ENCODE measurements at regions of chr7 and their contacts with region 1.

Region 1: GRCh38 chr7:30412810-30413504 is 65.6 kb downstream of the NOD1 start:
- DNase-seq: peak in 3 of 9 donors; percentile 7 to 15 (median 8)
- ATAC-seq: peak; percentile 49
- H3K4me3 ChIP-seq: no peak overlapping the region
- H3K4me3 Mint-ChIP-seq: no peak overlapping the region
- H3K27ac ChIP-seq: no peak overlapping the region
- H3K27ac Mint-ChIP-seq: no peak overlapping the region
- H3K4me1 ChIP-seq: no peaks in the 10 kb centered on the region
- H3K4me1 Mint-ChIP-seq: peaks cover 0 to 6% (median 0%) of the 10 kb centered on the region in 7 donors
- H3K27me3 ChIP-seq: no peaks in the 10 kb centered on the region
- H3K27me3 Mint-ChIP-seq: no peaks in the 10 kb centered on the region

Region 2: GRCh38 chr7:30164567-30164966 is 248.4 kb before region 1 on chr7:
- CTCF ChIA-PET with region 1: no interaction called
- POLR2A ChIA-PET with region 1: no interaction called
- intact Hi-C with region 1: loop called in 1 of 2 experiments (anchors 2 kb)
- DNase-seq: no peak
- ATAC-seq: peak; percentile 43
- H3K4me3 ChIP-seq: no peak overlapping the region
- H3K4me3 Mint-ChIP-seq: no peak overlapping the region
- H3K27ac ChIP-seq: no peak overlapping the region
- H3K27ac Mint-ChIP-seq: no peak overlapping the region
- H3K4me1 ChIP-seq: peaks cover 10 to 20% of the 10 kb centered on the region in 2 donors
- H3K4me1 Mint-ChIP-seq: peaks cover 25 to 44% (median 32%) of the 10 kb centered on the region in 7 donors
- H3K27me3 ChIP-seq: no peaks in the 10 kb centered on the region
- H3K27me3 Mint-ChIP-seq: peaks cover 0 to 3% (median 0%) of the 10 kb centered on the region in 5 donors

Region 3: DNA sequence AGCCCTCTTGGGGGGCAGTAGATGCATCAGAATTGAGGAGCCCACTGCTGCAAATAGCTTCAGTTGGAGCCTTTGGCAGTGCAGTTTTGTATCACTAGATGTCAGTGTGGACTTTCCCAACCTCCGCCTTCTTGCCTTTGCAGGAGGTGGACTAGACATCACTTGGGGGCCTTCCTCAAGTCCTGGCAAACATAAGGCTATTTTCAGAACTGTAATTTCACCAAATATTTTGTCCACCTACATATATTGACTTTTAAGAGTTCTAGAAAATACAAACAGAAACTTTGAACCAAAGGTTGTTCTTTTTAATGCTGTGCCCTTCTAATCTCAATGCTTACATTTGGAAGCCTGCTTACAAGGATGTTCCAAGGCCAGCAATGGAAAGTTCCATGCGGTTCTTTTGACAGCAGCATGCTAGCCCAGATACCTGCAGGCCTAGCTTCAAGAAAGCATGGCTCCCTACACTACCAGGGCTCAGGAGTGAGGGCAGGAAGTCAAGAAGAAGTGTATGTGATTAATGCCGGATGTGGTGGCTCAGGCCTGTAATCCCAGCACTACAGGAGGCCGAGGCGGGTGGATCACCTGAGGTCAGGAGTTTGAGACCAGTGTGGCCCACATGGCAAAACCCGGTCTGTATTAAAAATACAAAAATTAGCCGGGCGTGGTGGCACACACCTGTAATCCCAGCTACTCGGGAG is 136.6 kb before region 1 on chr7:
- CTCF ChIA-PET with region 1: interaction called, 7 read pairs
- POLR2A ChIA-PET with region 1: interaction called, 3 read pairs
- intact Hi-C with region 1: loop called (anchors 1 kb)
- DNase-seq: peak; percentile 10 to 66 (median 40)
- ATAC-seq: peak; percentile 79
- H3K4me3 ChIP-seq: no peak overlapping the region
- H3K4me3 Mint-ChIP-seq: no peak overlapping the region
- H3K27ac ChIP-seq: no peak overlapping the region
- H3K27ac Mint-ChIP-seq: peak overlapping the region in 1 of 9 donors; percentile 10
- H3K4me1 ChIP-seq: no peaks in the 10 kb centered on the region
- H3K4me1 Mint-ChIP-seq: peaks cover 0 to 9% (median 4%) of the 10 kb centered on the region in 7 donors
- H3K27me3 ChIP-seq: no peaks in the 10 kb centered on the region
- H3K27me3 Mint-ChIP-seq: peaks cover 0 to 4% (median 0%) of the 10 kb centered on the region in 5 donors

Measured in naive thymus-derived CD4-positive, alpha-beta T cell (primary cell).